Activated B cell treated with CpG ODN at 0.5 μM for 24 hours (primary cell): ENCODE measurements at regions of chr16 and their contacts with region 1.

Region 1: DNA sequence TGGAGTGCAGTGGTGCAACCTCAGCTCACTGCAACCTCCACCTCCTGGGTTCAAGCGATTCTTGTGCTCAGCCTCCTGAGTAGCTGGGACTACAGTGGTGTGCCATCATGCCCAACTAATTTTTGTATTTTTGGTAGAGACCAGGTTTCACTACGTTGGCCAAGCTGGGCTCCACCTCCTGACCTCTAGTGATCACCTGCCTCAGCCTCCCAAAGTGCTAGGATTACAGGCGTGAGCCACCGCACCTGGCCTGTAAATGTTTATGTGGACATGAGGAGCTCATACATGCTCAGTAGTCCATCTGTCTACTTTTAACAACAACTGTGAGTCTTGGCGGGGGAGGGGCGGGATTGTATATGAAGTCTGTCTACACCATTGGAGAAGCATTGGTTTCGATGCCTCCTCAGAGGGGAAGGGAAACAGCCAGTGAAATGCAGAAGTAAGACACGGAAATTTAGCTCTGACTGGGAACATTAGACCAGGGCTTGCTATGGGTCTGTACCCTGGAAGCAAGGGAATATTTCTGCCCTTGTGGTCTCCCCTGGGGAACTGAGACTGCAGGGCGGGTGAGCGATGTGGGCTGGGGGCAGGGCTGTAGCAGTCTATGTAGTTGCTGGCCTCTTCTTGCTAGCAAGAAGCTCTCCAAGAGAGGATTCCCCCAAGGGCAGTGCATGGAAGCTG is 9.3 kb downstream of the NUBP1 start:
- DNase-seq: peak; percentile 53
- ATAC-seq: peak; percentile 86
- H3K4me3 Mint-ChIP-seq: peak overlapping the region; percentile 63
- H3K27ac Mint-ChIP-seq: peak overlapping the region; percentile 77
- H3K4me1 Mint-ChIP-seq: peaks cover 61% of the 10 kb centered on the region
- H3K27me3 Mint-ChIP-seq: no peaks in the 10 kb centered on the region
- CTCF ChIP-seq: no peak

Region 2: DNA sequence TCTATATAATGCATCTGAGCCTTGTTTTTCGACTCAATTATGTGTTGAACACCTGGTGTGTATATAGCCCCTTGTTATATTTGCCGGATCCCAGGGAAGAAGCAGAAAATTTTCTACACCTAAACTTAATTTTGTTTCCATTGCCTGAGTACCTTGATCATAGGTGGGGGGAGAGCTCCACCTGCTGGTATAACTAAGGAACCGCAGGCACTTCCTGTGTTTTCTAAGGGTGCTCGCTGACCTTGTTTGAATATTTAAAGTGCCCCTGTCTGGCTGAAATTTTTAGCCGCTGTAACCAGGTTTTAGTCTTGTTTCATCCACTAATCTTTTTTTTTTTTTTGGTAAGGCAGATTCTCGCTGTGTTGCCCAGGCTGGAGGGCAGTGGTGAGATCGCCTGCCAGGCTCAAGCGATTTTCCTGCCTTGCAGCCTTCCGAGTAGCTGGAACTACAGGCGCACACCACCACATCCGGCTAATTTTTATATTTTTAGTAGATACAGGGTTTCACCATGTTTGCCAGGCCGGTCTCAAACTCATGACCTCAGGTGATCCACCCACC is 15.8 kb before region 1 on chr16:
- CTCF ChIA-PET with region 1: interaction called, 3 read pairs
- POLR2A ChIA-PET with region 1: interaction called, 49 read pairs
- intact Hi-C with region 1: loop called (anchors 2 kb)
- DNase-seq: no peak
- ATAC-seq: peak; percentile 65
- H3K4me3 Mint-ChIP-seq: peak overlapping the region; percentile 68
- H3K27ac Mint-ChIP-seq: peak overlapping the region; percentile 90
- H3K4me1 Mint-ChIP-seq: peaks cover 51% of the 10 kb centered on the region
- H3K27me3 Mint-ChIP-seq: no peaks in the 10 kb centered on the region
- CTCF ChIP-seq: peak; percentile 60

Region 3: DNA sequence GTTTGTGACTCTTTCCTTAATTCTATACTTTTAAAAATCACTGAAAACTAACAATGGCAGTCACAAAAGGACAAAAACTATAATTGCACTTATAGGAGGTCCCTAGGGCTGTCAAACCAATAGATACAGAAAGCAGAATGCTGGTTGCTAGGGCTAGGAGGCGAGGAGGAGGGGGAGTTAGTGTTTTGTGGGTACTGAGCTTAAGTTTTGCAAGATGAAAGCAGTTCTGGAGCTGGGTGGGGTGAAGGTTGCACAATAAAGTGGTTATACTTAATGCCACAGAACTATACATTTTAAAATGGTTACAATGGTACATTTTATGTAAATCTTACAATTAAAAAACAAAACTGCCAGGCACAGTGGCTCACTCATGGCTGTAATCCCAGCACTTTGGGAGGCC is 17.9 kb after region 1 on chr16:
- CTCF ChIA-PET with region 1: interaction called, 3 read pairs
- POLR2A ChIA-PET with region 1: interaction called, 19 read pairs
- intact Hi-C with region 1: no loop called
- DNase-seq: no peak
- ATAC-seq: no peak
- H3K4me3 Mint-ChIP-seq: no peak overlapping the region
- H3K27ac Mint-ChIP-seq: no peak overlapping the region
- H3K4me1 Mint-ChIP-seq: peaks cover 35% of the 10 kb centered on the region
- H3K27me3 Mint-ChIP-seq: no peaks in the 10 kb centered on the region
- CTCF ChIP-seq: no peak

Region 4: GRCh38 chr16:10812312-10813098 is 59.5 kb after region 1 on chr16:
- CTCF ChIA-PET with region 1: no interaction called
- POLR2A ChIA-PET with region 1: interaction called, 7 read pairs
- intact Hi-C with region 1: loop called (anchors 1 kb)
- DNase-seq: no peak
- ATAC-seq: peak; percentile 70
- H3K4me3 Mint-ChIP-seq: peak overlapping the region; percentile 49
- H3K27ac Mint-ChIP-seq: peak overlapping the region; percentile 62
- H3K4me1 Mint-ChIP-seq: peaks cover 63% of the 10 kb centered on the region
- H3K27me3 Mint-ChIP-seq: no peaks in the 10 kb centered on the region
- CTCF ChIP-seq: no peak

Region 5: DNA sequence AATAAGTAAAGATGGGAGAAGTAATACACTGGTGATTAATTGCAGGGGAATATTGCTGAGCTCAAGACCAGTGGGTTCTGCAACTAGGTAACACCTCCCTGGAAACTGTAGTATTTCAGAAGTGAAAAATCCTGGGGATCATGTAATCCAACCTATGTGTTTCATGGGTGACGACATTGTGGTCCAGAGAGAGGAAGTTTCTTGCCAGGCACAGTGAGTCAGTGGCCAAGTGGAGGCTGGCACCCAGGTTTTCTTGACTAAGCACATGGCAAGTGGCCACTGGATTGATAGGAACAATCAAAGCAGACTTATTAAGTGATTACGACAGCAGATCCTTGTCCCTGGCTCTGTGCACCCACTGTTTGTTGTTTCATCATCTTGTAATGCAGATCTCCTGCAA is 109.4 kb after region 1 on chr16:
- CTCF ChIA-PET with region 1: no interaction called
- POLR2A ChIA-PET with region 1: no interaction called
- intact Hi-C with region 1: no loop called
- DNase-seq: no peak
- ATAC-seq: no peak
- H3K4me3 Mint-ChIP-seq: no peak overlapping the region
- H3K27ac Mint-ChIP-seq: peak overlapping the region; percentile 50
- H3K4me1 Mint-ChIP-seq: peaks cover 55% of the 10 kb centered on the region
- H3K27me3 Mint-ChIP-seq: no peaks in the 10 kb centered on the region
- CTCF ChIP-seq: no peak

Region 6: GRCh38 chr16:10906914-10907756 is 154.2 kb after region 1 on chr16:
- CTCF ChIA-PET with region 1: no interaction called
- POLR2A ChIA-PET with region 1: interaction called, 5 read pairs
- intact Hi-C with region 1: loop called (anchors 1 kb)
- DNase-seq: no peak
- ATAC-seq: no peak
- H3K4me3 Mint-ChIP-seq: no peak overlapping the region
- H3K27ac Mint-ChIP-seq: peak overlapping the region; percentile 64
- H3K4me1 Mint-ChIP-seq: peaks cover 66% of the 10 kb centered on the region
- H3K27me3 Mint-ChIP-seq: no peaks in the 10 kb centered on the region
- CTCF ChIP-seq: no peak

Region 7: DNA sequence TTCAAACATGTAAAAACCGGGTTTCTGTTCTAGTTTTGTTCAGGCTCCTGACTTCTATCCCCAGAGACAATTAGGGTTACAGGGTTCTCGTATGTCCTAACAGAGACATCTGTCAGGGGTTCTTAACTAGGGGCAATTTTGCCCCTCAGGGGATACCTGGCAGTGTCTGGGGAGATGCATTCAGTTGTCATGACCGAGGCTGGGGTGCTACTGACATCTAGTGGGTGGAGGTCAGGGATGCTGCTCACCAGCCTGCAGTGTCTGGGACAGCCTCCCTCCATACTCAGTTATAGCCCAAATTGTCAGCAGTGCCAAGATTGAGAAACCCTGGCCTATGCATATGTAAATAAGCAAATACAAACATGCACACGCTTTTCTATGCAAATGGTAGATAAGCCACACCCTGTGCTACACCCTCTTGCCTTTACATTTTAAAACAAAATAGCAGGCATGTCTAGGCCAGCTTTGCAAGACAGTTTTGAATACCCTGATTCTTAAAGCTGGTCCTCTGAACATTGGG is 228.8 kb after region 1 on chr16:
- CTCF ChIA-PET with region 1: no interaction called
- POLR2A ChIA-PET with region 1: no interaction called
- intact Hi-C with region 1: no loop called
- DNase-seq: peak; percentile 64
- ATAC-seq: peak; percentile 88
- H3K4me3 Mint-ChIP-seq: peak overlapping the region; percentile 69
- H3K27ac Mint-ChIP-seq: peak overlapping the region; percentile 84
- H3K4me1 Mint-ChIP-seq: peaks cover 49% of the 10 kb centered on the region
- H3K27me3 Mint-ChIP-seq: no peaks in the 10 kb centered on the region
- CTCF ChIP-seq: no peak

Region 8: GRCh38 chr16:10992797-10993196 is 239.8 kb after region 1 on chr16:
- CTCF ChIA-PET with region 1: no interaction called
- POLR2A ChIA-PET with region 1: no interaction called
- intact Hi-C with region 1: no loop called
- DNase-seq: no peak
- ATAC-seq: no peak
- H3K4me3 Mint-ChIP-seq: no peak overlapping the region
- H3K27ac Mint-ChIP-seq: no peak overlapping the region
- H3K4me1 Mint-ChIP-seq: peaks cover 31% of the 10 kb centered on the region
- H3K27me3 Mint-ChIP-seq: no peaks in the 10 kb centered on the region
- CTCF ChIP-seq: no peak

Region 9: DNA sequence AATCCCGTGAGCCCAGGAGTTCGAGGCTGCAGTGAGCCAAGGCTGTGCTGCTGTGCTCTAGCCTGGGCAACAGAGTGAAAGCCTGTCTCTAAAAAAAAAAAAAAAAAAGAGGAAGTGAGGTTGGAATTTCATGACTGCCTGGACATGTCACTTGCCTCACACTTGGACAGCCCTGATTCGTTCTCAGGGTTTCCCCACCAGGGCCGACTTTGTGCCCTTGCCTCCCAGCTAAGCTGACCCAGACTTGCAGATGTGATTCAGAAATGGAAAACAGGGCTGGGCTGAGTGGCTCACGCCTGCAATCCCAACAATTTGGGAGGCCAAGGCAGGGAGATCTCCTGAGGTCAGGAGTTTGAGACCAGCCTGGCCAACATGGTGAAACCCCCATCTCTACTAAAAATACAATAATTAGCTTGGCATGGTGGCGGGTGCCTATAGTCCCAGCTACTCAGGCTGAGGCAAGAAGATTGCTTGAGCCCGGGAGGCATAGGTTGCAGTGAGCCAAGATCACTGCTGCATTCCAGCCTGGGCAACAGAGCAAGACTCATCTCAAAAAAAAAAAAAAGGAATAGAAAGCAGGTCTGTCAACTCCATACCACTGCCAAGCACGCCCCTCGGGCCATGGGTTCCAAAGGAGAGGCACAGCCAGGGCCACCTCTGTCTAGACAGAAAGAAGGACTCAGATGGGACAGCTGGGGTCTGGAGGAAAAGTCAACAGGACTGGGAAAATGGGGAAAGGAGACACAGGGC is 456.1 kb after region 1 on chr16:
- CTCF ChIA-PET with region 1: no interaction called
- POLR2A ChIA-PET with region 1: no interaction called
- intact Hi-C with region 1: no loop called
- DNase-seq: no peak
- ATAC-seq: peak; percentile 16
- H3K4me3 Mint-ChIP-seq: no peak overlapping the region
- H3K27ac Mint-ChIP-seq: no peak overlapping the region
- H3K4me1 Mint-ChIP-seq: peaks cover 48% of the 10 kb centered on the region
- H3K27me3 Mint-ChIP-seq: peaks cover 7% of the 10 kb centered on the region
- CTCF ChIP-seq: no peak